Right ventricle myocardium inferior (tissue), 1 donor: ENCODE measurements at regions of chr6 and their contacts with region 1.

Region 1: GRCh38 chr6:11653028-11653583 is 115.6 kb downstream of the TMEM170B start:
- DNase-seq: no peak
- ATAC-seq: no peak

Region 2: GRCh38 chr6:11575408-11576033 is 77.6 kb before region 1 on chr6:
- intact Hi-C with region 1: no loop called
- DNase-seq: no peak
- ATAC-seq: peak; percentile 90

Region 3: DNA sequence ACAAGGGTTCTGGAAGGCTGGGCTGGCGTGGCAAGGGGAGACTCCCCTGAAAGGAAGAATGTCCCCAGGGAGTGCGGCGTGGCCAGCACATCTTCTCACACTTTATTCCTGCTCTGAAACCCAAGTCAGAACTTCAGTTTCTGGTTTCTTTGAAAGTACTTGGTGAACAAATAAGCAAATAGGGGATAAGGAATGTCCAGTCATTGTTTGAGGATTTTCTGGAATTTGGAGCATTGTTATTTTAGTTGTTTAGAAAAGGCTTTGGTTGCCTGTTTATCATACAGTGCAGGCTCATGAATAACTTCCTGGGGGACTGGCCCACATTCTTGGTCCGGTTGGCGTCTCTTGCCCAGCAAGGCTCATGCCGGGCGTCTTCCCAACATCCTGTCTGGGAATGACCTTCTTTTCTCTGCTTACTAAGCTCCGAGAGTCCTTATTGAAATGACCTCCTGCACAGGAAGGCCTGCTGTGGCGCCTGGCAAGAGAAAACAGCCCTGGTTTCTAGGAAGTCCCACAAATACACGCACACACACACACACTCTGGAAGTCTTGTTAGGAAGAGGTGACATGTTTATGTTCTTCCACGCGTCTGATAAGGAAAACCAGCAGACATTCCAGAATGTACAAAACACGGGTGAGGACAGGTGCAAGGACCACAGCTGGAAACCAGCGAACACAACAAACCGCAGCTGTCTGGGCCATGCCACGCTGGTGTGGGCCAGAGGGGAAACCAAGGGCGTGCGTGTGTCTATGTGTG is 43.6 kb before region 1 on chr6:
- intact Hi-C with region 1: loop called (anchors 1 kb)
- DNase-seq: peak; percentile 75
- ATAC-seq: peak; percentile 15

Region 4: GRCh38 chr6:11938285-11938890 is 285.3 kb after region 1 on chr6:
- intact Hi-C with region 1: no loop called
- DNase-seq: no peak
- ATAC-seq: no peak

Region 5: DNA sequence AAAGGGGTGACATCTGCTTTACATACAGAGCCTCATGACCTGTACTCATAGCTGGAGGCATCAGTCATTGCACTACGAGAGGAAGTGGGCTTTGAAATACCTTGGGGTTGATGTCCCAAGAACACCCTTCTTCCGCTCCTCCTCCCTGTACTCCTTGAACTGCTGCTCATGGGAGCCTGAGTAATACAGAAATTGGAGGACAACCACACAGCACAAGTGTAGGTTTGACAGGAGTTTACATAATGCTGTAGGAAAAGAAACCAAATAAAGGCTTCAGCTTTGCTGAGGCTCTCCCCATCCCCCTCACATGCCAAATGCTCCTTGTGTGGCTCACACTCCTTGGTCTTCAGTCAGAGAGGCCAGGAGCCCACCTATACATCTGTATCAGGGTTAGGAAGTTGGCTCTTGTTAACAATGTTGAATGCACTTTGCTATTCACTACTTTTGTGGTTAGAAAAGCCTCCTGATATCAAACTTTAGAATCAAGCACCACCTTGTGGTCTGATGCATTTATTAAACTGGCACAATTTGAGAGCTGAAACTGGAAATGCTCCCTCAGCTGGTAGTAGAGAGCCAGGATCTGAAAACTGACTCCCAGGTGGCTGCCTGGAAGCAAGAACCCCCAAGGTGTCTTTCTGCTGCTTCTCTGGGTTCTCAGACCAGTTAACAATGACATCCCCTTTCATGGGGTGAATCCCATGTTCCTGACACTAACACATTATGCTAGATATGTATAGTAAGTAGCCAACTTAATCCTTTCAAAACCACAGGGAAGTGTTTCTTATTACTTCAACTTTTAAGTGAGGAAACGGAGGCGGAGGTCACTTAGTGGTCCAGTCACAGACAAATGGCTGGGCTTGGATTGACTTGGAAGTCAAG is 580.8 kb after region 1 on chr6:
- intact Hi-C with region 1: loop called (anchors 2 kb)
- DNase-seq: no peak
- ATAC-seq: peak; percentile 76

Region 6: DNA sequence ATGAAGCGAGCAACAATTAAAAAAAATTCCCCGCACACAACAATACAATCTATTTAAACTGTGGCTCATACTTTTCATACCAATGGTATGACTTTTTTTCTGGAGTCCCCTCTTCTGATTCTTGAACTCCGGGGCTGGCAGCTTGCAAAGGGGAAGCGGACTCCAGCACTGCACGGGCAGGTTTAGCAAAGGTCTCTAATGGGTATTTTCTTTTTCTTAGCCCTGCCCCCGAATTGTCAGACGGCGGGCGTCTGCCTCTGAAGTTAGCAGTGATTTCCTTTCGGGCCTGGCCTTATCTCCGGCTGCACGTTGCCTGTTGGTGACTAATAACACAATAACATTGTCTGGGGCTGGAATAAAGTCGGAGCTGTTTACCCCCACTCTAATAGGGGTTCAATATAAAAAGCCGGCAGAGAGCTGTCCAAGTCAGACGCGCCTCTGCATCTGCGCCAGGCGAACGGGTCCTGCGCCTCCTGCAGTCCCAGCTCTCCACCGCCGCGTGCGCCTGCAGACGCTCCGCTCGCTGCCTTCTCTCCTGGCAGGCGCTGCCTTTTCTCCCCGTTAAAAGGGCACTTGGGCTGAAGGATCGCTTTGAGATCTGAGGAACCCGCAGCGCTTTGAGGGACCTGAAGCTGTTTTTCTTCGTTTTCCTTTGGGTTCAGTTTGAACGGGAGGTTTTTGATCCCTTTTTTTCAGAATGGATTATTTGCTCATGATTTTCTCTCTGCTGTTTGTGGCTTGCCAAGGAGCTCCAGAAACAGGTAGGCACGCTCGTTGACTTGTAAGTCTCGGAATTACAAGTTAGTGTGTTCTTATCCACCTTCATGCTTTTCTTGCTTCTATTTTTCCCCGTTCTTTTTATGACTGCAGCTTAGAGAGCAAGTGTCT is 637.1 kb after region 1 on chr6 and contains the start of gene EDN1:
- intact Hi-C with region 1: loop called (anchors 5 kb)
- DNase-seq: peak; percentile 87
- ATAC-seq: peak; percentile 75
- total RNA-seq, gene EDN1: 2.9 TPM

Region 7: GRCh38 chr6:12605888-12606345 is 952.8 kb after region 1 on chr6:
- intact Hi-C with region 1: loop called (anchors 5 kb)
- DNase-seq: no peak
- ATAC-seq: peak; percentile 60